ENCODE measurements at regions of chr17 and their contacts with region 1.

Region 1: DNA sequence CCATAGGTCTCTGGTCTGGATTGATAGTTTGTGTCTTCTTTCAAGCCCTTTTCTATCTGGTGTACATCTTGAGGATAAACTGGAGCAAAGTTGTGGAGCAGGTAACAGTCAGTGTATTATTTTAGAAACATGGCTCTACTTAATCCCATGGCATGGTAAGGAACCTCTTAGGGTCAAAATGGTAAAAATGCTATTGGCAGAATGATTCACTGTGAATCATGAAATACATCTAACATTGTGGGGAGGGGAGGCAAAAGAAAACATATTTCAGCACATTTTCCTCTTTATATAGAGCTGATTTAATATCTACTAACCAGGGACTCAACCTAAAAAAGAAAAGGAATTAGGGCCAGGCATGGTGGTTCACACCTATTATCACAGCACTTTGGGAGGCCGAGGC is 17.9 kb upstream of the ALDH3A2 start:
- DNase-seq: no peak
- H3K4me3 ChIP-seq: no peak overlapping the region
- H3K27ac ChIP-seq: no peak overlapping the region
- H3K4me1 ChIP-seq: no peaks in the 10 kb centered on the region
- H3K27me3 ChIP-seq: no peaks in the 10 kb centered on the region
- CTCF ChIP-seq: no peak
- POLR2A ChIP-seq: no peak

Region 2: DNA sequence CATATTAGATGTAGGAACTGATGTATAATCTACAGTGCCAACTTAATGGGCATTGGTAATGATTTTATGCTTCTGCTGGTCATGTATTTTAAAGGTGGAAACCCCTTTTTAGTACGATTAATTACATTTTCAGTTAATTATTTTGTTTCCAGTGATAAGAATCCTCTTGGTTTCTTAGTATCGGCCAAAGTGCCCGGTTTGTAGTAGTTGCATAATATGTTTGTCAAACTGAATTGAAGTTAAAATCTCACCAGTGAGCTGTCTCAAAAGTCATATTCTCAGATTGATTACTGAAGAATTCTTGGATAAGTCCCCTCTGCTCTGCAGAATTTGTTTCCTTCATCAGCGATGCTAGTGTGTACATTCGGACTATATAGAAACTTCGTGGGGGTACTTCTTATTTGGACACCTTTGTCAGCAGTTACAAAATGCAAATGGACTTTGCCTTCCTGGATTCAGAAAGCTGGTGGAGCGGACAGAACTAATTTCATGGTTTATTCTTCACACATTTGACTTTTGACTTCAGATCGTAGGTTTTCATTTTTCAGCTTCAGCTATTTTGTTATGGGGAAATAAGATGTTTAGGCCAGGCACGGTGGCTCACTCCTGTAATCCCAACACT is 68.9 kb before region 1 on chr17:
- intact Hi-C with region 1: no loop called
- DNase-seq: no peak
- H3K4me3 ChIP-seq: no peak overlapping the region
- H3K27ac ChIP-seq: no peak overlapping the region
- H3K4me1 ChIP-seq: no peaks in the 10 kb centered on the region
- H3K27me3 ChIP-seq: no peaks in the 10 kb centered on the region
- CTCF ChIP-seq: no peak
- POLR2A ChIP-seq: no peak

Region 3: DNA sequence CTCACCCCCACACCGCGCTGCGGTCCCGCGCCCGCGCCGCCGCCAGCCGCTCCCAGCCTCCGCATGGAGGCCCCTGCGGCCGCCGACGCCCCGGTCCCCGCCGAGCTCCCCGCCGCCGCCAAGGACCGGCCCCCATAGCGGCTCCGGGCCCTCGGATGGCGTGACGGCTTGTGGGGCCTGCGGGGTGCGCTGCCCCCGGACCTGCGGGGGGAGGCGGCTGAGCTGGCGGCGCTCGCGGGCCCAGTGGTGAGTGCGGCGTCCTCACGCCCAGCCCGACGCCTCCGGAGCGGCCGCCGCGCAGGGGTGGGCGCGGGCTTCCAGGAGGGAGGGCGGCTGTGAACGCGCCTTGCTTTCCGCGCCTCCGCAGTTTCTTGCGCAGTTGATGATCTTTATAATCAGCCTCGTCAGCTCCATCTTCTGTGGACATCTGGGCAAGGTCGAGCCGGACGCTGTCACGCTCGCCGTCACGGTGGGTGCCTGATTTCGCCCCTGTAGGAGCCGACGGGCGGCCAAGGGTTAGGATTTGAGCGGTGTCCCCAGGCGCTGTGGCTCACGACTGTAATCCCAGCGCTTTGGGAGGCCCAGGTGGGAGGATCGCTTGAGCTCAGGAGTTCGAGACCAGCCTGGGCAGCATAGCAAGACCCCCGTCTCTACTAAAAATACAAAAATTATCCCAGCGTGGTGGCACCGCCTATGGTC is 50.6 kb before region 1 on chr17:
- intact Hi-C with region 1: loop called (anchors 10 kb)
- DNase-seq: peak; percentile 12 to 20
- H3K4me3 ChIP-seq: peak overlapping the region in 2 of 3 donors; percentile 35 to 43
- H3K27ac ChIP-seq: no peak overlapping the region
- H3K4me1 ChIP-seq: peaks cover 0 to 4% of the 10 kb centered on the region in 2 donors
- H3K27me3 ChIP-seq: no peaks in the 10 kb centered on the region
- CTCF ChIP-seq: no peak
- POLR2A ChIP-seq: no peak